Mammary epithelial cell (primary cell): ENCODE measurements at regions of chr6 and their contacts with region 1.

Region 1: DNA sequence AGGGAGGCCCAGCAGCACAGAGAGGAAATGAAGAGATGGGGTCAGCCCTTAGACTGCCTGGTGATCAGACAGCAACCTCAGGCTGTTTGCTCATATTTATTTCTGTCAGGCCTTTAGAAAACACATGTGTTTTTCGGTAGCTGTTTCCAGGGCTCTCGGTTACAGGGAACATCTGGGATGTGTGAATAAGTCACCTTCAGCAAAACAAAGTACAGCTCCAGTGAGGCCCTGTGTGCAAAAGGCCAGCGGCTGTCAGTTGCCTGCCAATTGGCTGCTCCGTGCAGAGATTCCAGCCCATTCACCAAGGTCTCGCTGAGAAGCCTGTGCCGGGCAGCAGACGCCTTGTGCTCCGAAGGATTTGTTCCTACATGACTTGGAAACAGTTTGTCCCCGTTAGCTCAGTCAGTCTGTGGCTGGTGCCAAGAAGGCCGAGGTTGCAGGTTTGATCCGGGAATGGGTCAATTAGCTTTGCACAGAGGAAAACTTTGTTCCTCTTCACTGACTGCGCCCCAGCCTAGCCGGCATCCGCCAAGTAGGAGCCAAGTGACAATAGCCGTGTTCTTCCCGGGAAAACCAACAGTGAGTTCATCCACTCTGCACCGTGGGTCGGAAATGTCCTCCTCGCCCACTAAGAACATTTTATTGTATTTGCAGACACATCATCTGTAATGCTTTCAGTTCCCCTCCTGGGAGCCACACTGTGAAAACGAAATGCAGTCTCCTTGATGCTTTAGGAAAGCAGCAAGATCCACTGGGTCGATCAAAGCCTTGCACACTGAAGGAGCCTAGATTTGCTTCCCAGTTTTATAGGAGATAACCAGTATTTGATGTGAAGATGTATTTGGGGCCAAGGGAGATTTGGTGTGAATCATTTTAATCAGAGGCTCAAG is 315.4 kb upstream of the CDYL start:
- DNase-seq: no peak
- H3K4me3 ChIP-seq: no peak overlapping the region
- H3K27ac ChIP-seq: no peak overlapping the region
- H3K4me1 ChIP-seq: peaks cover 26% of the 10 kb centered on the region
- H3K27me3 ChIP-seq: no peaks in the 10 kb centered on the region
- CTCF ChIP-seq: no peak

Region 2: DNA sequence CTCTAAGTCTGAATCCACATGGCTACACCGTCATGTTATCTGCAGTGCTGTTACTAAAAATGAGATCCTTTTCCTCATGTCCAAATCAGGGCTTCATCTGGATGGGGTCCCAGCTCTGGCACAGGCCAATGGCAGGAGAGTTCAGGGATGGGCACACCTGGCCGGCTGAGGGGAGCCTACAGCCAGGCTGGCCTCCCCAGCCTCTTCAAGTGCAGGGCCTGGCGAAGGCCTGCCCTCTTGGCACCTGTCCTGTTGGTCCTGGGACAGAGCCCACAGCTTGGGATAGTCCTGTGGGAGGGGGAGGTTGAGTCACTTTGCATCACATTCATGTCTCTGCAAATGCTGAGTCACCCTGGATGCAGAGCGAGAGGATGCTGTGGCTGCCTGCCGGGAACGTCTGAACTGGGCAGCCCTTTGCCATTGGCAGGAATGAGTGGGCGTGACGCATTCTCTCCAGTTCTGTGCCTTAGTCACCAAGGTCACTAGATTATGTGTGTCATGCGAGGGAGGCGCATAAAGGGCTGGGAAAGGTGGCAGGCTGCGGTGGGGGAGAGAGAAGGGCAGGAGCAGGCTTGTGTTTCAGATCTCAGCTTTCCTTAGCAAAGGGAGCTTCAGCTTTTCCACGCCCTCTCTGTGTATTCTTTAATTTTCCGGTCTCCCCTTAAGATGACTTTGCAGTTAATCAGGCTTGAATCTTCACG is 102.3 kb before region 1 on chr6:
- CTCF ChIA-PET with region 1: no interaction called
- dilution Hi-C with region 1: no loop called
- in situ Hi-C with region 1: no loop called
- intact Hi-C with region 1: loop called (anchors 5 kb)
- DNase-seq: peak; percentile 100
- H3K4me3 ChIP-seq: peak overlapping the region in 1 of 3 experiments; percentile 6
- H3K27ac ChIP-seq: peak overlapping the region; percentile 92
- H3K4me1 ChIP-seq: peaks cover 39% of the 10 kb centered on the region
- H3K27me3 ChIP-seq: no peaks in the 10 kb centered on the region
- CTCF ChIP-seq: no peak